ENCODE measurements at regions of chr16 and their contacts with region 1.

Region 1: DNA sequence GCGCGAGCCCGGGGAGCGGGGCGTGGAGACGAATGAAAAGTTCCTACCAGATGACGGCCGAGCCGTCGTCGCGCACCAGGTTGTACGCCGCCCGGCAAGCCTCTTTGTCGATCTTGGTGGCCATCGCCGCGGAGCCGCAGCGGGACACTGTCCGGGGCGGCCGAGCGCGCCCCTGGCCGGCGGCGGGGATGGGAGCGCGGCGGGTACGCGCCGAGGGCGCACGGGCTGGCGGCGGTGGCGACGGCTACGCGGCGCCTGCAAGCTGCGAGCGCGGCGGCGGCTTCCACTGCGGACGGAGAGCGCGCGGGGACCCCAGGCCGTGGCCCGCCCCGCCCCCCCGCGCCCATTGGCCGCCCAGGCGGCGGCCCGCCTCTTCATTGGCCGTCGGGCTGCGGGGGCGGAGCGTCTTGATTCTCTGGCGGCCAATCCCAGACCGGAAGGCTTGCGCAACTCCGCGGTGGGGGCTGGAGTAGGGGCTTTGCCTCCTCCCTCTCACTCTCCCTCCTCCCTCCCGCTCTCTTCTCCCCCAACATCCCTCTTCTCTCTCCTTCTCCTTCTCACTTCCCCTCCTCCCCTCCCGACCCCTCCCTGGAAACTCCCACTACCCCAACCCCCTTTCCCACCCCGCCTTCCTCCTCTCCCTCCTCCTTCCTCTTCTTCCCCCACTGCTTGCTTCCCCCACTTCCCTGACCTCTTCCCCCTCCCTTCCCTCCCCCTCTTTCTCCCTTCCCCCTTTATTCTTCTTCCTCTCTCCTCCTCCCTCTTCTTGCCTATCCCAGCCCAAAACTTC is at the start of gene COTL1:
- DNase-seq: peak; percentile 97
- H3K4me3 ChIP-seq: peak within 1 kb of the TSS; percentile 68 to 83
- H3K27ac ChIP-seq: peak within 1 kb of the TSS; percentile 7 to 92; a peak in 3 of 4 replicates
- H3K4me1 ChIP-seq: peaks cover 13 to 24% of the 10 kb centered on the region in 2 experiments; a peak in 3 of 4 replicates
- H3K27me3 ChIP-seq: no peaks in the 10 kb centered on the region
- CTCF ChIP-seq: no peak
- EP300 ChIP-seq: 0 out of 4 replicates have a peak, but pooled peaks of 1 of the 2 experiments have one; percentile 31
- RAD21 ChIP-seq: no peak
- polyA plus RNA-seq, gene COTL1: 59.5 and 91.6 TPM in 2 replicates

Region 2: GRCh38 chr16:84511180-84511824 is 106.7 kb before region 1 on chr16:
- CTCF ChIA-PET with region 1: interaction called, 79 read pairs
- POLR2A ChIA-PET with region 1: no interaction called
- DNase-seq: peak; percentile 85
- H3K4me3 ChIP-seq: peak overlapping the region; percentile 23 to 26; a peak in 3 of 4 replicates
- H3K27ac ChIP-seq: no peak overlapping the region
- H3K4me1 ChIP-seq: peaks cover 0 to 8% of the 10 kb centered on the region in 2 experiments; a peak in 1 of 4 replicates
- H3K27me3 ChIP-seq: no peaks in the 10 kb centered on the region
- CTCF ChIP-seq: peak; percentile 95
- EP300 ChIP-seq: no peak
- RAD21 ChIP-seq: peak; percentile 91

Region 3: DNA sequence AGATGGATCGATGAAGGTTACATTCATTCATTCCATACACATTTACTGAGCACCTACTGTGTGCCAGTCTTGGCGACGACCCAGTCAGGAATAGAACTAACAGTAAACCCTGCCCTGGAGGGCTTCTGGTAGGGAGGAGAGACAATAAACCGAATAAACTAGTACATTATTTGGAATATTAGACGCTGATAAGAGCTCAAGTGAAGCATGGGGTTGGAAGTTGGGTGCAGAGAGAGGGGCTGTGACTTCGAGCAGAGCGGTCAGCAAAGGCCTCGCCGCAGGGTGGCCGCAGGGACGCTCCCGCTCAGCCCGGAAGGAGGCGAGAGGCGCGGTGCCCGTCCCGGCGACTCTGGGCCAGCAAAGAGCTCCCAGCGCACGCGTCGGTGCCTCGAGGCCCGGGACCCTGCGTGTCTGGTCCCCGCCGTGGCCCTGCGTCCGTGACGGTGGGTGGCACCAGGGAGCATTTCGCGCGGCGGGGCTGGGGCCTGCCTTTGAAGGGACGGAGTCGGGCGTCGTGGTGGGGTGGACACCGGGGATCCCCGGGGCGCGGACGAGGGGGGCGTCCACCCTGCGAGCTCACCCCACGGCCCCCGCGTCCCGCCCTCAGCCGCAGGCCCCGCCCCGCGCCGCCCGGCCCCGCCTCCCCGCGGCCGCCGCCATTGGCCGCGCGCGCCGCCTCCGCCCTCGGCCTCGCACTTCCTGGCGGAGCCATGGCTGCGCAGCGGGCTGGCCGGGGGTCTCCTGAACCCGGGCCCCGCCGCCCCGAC is 30.0 kb after region 1 on chr16 and contains the start of gene KLHL36:
- CTCF ChIA-PET with region 1: interaction called, 33 read pairs
- POLR2A ChIA-PET with region 1: no interaction called
- DNase-seq: peak; percentile 96
- H3K4me3 ChIP-seq: peak within 1 kb of the TSS; percentile 65 to 74
- H3K27ac ChIP-seq: peak within 1 kb of the TSS; percentile 45 to 70
- H3K4me1 ChIP-seq: peaks cover 12 to 20% of the 10 kb centered on the region in 2 experiments; a peak in 2 of 4 replicates
- H3K27me3 ChIP-seq: no peaks in the 10 kb centered on the region
- CTCF ChIP-seq: no peak
- EP300 ChIP-seq: no peak
- RAD21 ChIP-seq: no peak
- polyA plus RNA-seq, gene KLHL36: 39.8 and 43.3 TPM in 2 replicates

Region 4: GRCh38 chr16:84720177-84720579 is 102.2 kb after region 1 on chr16:
- CTCF ChIA-PET with region 1: interaction called, 275 read pairs
- POLR2A ChIA-PET with region 1: no interaction called
- DNase-seq: peak; percentile 71
- H3K4me3 ChIP-seq: peak overlapping the region; percentile 12 to 27; a peak in 2 of 4 replicates
- H3K27ac ChIP-seq: peak overlapping the region; percentile 68 to 84
- H3K4me1 ChIP-seq: peaks cover 22 to 30% of the 10 kb centered on the region in 2 experiments; a peak in 3 of 4 replicates
- H3K27me3 ChIP-seq: no peaks in the 10 kb centered on the region
- CTCF ChIP-seq: peak; percentile 10; the same call in 1 of the 2 replicates
- EP300 ChIP-seq: peak in 1 of 2 experiments; percentile 81; a peak in 2 of 4 replicates
- RAD21 ChIP-seq: no peak

Region 5: DNA sequence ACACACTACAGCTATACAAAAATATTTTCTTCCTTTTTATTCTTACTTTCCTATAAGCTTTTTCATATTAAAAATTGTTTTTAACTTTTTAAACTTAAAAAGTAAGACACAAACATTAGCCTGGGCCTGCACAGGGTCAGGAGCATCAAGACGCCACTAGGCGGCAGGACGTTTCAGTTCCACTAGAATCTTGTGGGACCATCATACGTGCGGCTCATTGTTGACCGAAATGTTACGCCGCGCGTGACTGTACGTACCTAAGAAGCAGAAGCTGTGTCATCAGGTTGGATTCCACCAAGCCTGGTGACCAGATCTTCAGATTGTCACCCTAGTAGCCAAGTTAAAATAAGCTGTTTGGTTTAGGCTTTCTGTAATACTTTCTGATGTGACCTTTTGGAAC is 128.9 kb after region 1 on chr16:
- CTCF ChIA-PET with region 1: interaction called, 75 read pairs
- POLR2A ChIA-PET with region 1: no interaction called
- DNase-seq: no peak
- H3K4me3 ChIP-seq: no peak overlapping the region; a peak in 1 of 4 replicates
- H3K27ac ChIP-seq: no peak overlapping the region
- H3K4me1 ChIP-seq: peaks cover 0 to 4% of the 10 kb centered on the region in 2 experiments; a peak in 2 of 4 replicates
- H3K27me3 ChIP-seq: no peaks in the 10 kb centered on the region
- CTCF ChIP-seq: peak; percentile 49
- EP300 ChIP-seq: no peak
- RAD21 ChIP-seq: no peak